Naive thymus-derived CD4-positive, alpha-beta T cell (primary cell): ENCODE measurements at regions of chr2 and their contacts with region 1.

Region 1: DNA sequence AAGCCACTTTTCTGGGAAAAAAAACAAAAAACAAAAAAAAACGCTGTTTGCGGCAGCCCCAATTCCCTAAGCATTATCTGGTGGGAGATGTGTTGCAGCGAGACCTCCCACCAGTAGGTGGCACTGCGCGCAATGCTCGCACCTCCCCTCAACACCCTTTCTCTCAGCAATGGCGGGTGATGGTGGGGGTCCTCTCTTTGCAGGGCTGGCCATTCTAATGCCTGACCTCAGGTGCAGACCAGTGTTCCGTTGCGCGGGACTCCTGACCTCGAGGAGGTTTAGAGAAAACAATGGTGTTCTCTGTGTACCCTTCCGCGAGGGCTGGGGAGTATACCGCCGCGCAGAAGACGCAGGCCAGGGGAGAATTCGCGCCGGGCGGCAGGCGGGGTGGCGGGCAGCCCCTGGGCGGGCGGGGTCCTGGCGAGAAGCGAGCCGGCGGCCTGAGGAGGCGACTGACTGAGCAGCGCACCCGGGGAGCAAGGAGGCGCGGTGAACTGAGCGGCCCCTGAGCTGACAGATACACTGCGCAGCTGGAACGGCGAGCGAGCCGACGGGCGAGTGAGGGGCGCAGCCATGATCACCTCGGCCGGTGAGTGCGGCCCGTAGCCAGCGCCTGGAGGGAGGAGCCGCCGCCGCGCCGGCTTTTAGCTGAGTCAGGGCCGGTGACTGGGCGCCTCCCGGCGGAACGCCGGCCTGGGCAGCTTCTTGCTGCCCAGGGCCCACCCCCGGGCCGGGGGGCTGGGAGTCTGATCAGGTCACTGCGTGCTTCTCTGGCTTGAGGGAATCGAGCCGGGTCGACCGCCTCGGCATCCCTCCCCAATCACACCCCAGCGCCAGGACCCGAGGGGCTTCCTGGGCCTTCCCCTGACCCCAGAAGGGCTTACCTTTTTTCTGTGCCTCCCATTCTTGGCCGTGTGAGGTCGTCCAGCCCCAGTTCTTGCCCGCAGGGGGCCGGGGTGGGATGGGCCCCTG is at the start of gene PSMD1:
- DNase-seq: peak; percentile 89 to 98 (median 96)
- ATAC-seq: peak; percentile 96
- H3K4me3 ChIP-seq: peak within 1 kb of the TSS; percentile 70
- H3K4me3 Mint-ChIP-seq: peak within 1 kb of the TSS; percentile 96 to 99 (median 99)
- H3K27ac ChIP-seq: peak within 1 kb of the TSS; percentile 91
- H3K27ac Mint-ChIP-seq: peak within 1 kb of the TSS; percentile 99 to 100 (median 100)
- H3K4me1 ChIP-seq: peaks cover 18 to 23% of the 10 kb centered on the region in 2 donors
- H3K4me1 Mint-ChIP-seq: peaks cover 33 to 62% (median 51%) of the 10 kb centered on the region in 7 donors
- H3K27me3 ChIP-seq: no peaks in the 10 kb centered on the region
- H3K27me3 Mint-ChIP-seq: peaks cover 0 to 11% (median 7%) of the 10 kb centered on the region in 5 donors
- total RNA-seq, gene PSMD1: 30.3 to 121 (median 40.1) TPM

Region 2: GRCh38 chr2:230326453-230327417 is 730.0 kb before region 1 on chr2 and contains the start of gene SP140L:
- CTCF ChIA-PET with region 1: no interaction called
- POLR2A ChIA-PET with region 1: no interaction called
- intact Hi-C with region 1: loop called in 1 of 2 experiments (anchors 10 kb)
- DNase-seq: peak; percentile 48 to 83 (median 73)
- ATAC-seq: peak; percentile 99
- H3K4me3 ChIP-seq: peak within 1 kb of the TSS; percentile 86
- H3K4me3 Mint-ChIP-seq: peak within 1 kb of the TSS; percentile 90 to 100 (median 94)
- H3K27ac ChIP-seq: peak within 1 kb of the TSS; percentile 92
- H3K27ac Mint-ChIP-seq: peak within 1 kb of the TSS; percentile 95 to 99 (median 99)
- H3K4me1 ChIP-seq: peaks cover 23 to 36% of the 10 kb centered on the region in 2 donors
- H3K4me1 Mint-ChIP-seq: peaks cover 58 to 86% (median 85%) of the 10 kb centered on the region in 7 donors
- H3K27me3 ChIP-seq: no peaks in the 10 kb centered on the region
- H3K27me3 Mint-ChIP-seq: no peaks in the 10 kb centered on the region
- total RNA-seq, gene SP140L: 62.8 to 121 (median 89.5) TPM

Region 3: DNA sequence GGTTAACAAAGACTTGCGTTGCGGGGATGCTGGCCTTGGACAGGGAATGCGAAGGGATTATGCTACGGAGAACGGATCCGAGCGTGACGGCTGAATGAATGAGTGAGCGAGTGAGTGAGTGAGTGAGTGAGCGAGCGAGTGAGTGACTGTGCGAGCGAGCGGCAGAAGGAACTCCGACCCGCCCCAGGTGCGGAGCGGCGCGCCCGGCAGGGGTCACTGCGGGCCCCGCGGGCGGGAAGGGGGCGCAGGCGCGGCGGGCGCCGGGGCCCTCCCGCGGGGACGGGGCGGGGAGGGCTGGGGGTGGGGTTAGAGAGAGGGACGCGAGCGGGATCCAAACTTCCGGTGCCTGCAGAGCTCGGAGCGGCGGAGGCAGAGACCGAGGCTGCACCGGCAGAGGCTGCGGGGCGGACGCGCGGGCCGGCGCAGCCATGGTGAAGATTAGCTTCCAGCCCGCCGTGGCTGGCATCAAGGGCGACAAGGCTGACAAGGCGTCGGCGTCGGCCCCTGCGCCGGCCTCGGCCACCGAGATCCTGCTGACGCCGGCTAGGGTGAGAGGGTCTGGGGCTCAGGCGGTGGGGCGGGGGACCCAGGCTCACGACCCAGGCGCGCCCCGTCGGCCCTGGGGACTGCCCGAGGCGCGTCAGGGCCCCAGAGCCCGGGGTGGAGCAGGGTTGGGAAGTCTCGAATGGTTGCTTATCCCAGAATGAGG is 192.0 kb before region 1 on chr2 and contains the start of gene ITM2C:
- CTCF ChIA-PET with region 1: no interaction called
- POLR2A ChIA-PET with region 1: no interaction called
- intact Hi-C with region 1: loop called in 1 of 2 experiments (anchors 2 kb)
- DNase-seq: peak; percentile 67 to 78 (median 75)
- ATAC-seq: peak; percentile 92
- H3K4me3 ChIP-seq: peak within 1 kb of the TSS; percentile 66
- H3K4me3 Mint-ChIP-seq: peak within 1 kb of the TSS; percentile 77 to 98 (median 94)
- H3K27ac ChIP-seq: peak within 1 kb of the TSS; percentile 54
- H3K27ac Mint-ChIP-seq: peak within 1 kb of the TSS; percentile 28 to 92 (median 81)
- H3K4me1 ChIP-seq: peaks cover 24 to 27% of the 10 kb centered on the region in 2 donors
- H3K4me1 Mint-ChIP-seq: peaks cover 24 to 50% (median 46%) of the 10 kb centered on the region in 7 donors
- H3K27me3 ChIP-seq: no peaks in the 10 kb centered on the region
- H3K27me3 Mint-ChIP-seq: peaks cover 0 to 64% (median 2%) of the 10 kb centered on the region in 5 donors
- total RNA-seq, gene ITM2C: 7.4 to 27.7 (median 24.7) TPM

Region 4: DNA sequence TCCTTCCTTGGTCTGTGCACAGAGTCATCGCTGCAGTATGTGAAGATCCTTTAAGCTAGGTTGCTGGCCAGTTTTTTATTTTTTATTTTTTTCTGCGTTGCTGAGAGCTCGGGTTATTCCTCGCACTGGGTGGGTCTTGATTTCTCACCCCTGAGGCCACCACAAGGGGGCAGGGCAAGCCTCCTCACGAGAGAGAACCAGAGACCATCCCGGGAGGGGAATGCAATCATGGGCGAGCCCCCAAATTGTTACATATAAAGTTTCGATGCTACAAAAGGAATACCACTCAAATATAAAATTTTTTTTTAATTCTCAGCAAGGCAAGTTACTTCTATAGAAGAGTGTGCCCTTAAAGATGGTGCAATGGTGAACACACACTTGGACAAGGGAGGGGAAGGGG is 43.2 kb after region 1 on chr2:
- CTCF ChIA-PET with region 1: no interaction called
- POLR2A ChIA-PET with region 1: no interaction called
- intact Hi-C with region 1: no loop called
- DNase-seq: no peak
- ATAC-seq: no peak
- H3K4me3 ChIP-seq: no peak overlapping the region
- H3K4me3 Mint-ChIP-seq: no peak overlapping the region
- H3K27ac ChIP-seq: no peak overlapping the region
- H3K27ac Mint-ChIP-seq: no peak overlapping the region
- H3K4me1 ChIP-seq: no peaks in the 10 kb centered on the region
- H3K4me1 Mint-ChIP-seq: peaks cover 0 to 6% (median 4%) of the 10 kb centered on the region in 7 donors
- H3K27me3 ChIP-seq: no peaks in the 10 kb centered on the region
- H3K27me3 Mint-ChIP-seq: no peaks in the 10 kb centered on the region

Region 5: DNA sequence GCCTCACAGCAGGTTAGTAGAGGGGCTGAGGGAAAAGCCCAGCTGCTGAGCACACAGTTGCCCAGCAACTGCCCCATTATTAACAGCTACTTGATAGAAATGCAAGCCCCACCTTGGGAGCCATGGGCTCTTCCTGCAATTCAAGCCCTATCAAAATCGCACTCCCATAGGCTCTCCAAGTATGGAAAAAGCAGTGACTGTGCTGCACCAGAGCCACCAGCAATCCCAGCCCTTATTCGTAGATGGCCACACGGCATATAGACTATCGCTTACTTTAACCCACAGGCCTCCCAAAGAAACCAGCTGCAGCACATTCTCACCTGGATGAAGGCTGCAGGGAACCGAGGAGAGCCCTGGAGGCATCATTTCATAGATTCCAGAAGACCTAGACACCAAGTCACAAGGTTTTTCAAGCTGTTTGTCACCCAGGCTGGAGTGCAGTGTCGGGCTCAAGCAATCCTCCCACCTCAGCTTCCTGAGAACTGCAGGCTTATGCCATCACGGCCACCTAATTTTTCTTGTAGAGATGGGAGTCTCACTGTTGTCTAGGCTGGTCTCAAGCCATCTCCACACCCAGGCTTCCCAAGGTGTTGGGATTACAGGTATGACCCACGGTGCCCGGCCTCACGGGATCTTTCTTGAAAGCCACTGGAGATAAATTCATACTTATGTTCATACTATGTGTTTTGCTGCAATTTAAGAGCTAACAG is 396.2 kb after region 1 on chr2:
- CTCF ChIA-PET with region 1: interaction called, 3 read pairs
- POLR2A ChIA-PET with region 1: no interaction called
- intact Hi-C with region 1: loop called in 1 of 2 experiments (anchors 2 kb)
- DNase-seq: peak in 1 of 9 donors; percentile 20
- ATAC-seq: peak; percentile 16
- H3K4me3 ChIP-seq: no peak overlapping the region
- H3K4me3 Mint-ChIP-seq: peak overlapping the region in 2 of 10 donors; percentile 37 to 53
- H3K27ac ChIP-seq: no peak overlapping the region
- H3K27ac Mint-ChIP-seq: peak overlapping the region in 7 of 9 donors; percentile 31 to 84 (median 62)
- H3K4me1 ChIP-seq: no peaks in the 10 kb centered on the region
- H3K4me1 Mint-ChIP-seq: peaks cover 10 to 21% (median 12%) of the 10 kb centered on the region in 7 donors
- H3K27me3 ChIP-seq: no peaks in the 10 kb centered on the region
- H3K27me3 Mint-ChIP-seq: no peaks in the 10 kb centered on the region

Region 6: GRCh38 chr2:231706731-231707624 is 650.2 kb after region 1 on chr2:
- CTCF ChIA-PET with region 1: no interaction called
- POLR2A ChIA-PET with region 1: no interaction called
- intact Hi-C with region 1: loop called in 1 of 2 experiments (anchors 10 kb)
- DNase-seq: peak; percentile 96 to 99 (median 97)
- ATAC-seq: peak; percentile 62
- H3K4me3 ChIP-seq: peak overlapping the region; percentile 78
- H3K4me3 Mint-ChIP-seq: peak overlapping the region; percentile 95 to 99 (median 97)
- H3K27ac ChIP-seq: peak overlapping the region; percentile 100
- H3K27ac Mint-ChIP-seq: peak overlapping the region; percentile 100
- H3K4me1 ChIP-seq: peaks cover 19 to 21% of the 10 kb centered on the region in 2 donors
- H3K4me1 Mint-ChIP-seq: peaks cover 11 to 34% (median 23%) of the 10 kb centered on the region in 7 donors
- H3K27me3 ChIP-seq: no peaks in the 10 kb centered on the region
- H3K27me3 Mint-ChIP-seq: peaks cover 0 to 6% (median 0%) of the 10 kb centered on the region in 5 donors

Region 7: GRCh38 chr2:232550354-232551249 is 1493.9 kb after region 1 on chr2 and contains the starts of genes EIF4E2 and TIGD1:
- CTCF ChIA-PET with region 1: no interaction called
- POLR2A ChIA-PET with region 1: no interaction called
- intact Hi-C with region 1: loop called in 1 of 2 experiments (anchors 10 kb)
- DNase-seq: peak; percentile 82 to 93 (median 90)
- ATAC-seq: peak; percentile 91
- H3K4me3 ChIP-seq: peak within 1 kb of the TSS; percentile 88
- H3K4me3 Mint-ChIP-seq: peak within 1 kb of the TSS; percentile 91 to 100 (median 100)
- H3K27ac ChIP-seq: peak within 1 kb of the TSS; percentile 92
- H3K27ac Mint-ChIP-seq: peak within 1 kb of the TSS; percentile 97 to 100 (median 100)
- H3K4me1 ChIP-seq: peaks cover 15 to 36% of the 10 kb centered on the region in 2 donors
- H3K4me1 Mint-ChIP-seq: peaks cover 53 to 86% (median 83%) of the 10 kb centered on the region in 7 donors
- H3K27me3 ChIP-seq: no peaks in the 10 kb centered on the region
- H3K27me3 Mint-ChIP-seq: no peaks in the 10 kb centered on the region
- total RNA-seq, gene EIF4E2: 51.9 to 77.6 (median 61.6) TPM
- total RNA-seq, gene TIGD1: 9.7 to 23.4 (median 19.3) TPM